Head of caudate nucleus (tissue), 42 donors: ENCODE measurements at regions of chr17 and their contacts with region 1.

Region 1: DNA sequence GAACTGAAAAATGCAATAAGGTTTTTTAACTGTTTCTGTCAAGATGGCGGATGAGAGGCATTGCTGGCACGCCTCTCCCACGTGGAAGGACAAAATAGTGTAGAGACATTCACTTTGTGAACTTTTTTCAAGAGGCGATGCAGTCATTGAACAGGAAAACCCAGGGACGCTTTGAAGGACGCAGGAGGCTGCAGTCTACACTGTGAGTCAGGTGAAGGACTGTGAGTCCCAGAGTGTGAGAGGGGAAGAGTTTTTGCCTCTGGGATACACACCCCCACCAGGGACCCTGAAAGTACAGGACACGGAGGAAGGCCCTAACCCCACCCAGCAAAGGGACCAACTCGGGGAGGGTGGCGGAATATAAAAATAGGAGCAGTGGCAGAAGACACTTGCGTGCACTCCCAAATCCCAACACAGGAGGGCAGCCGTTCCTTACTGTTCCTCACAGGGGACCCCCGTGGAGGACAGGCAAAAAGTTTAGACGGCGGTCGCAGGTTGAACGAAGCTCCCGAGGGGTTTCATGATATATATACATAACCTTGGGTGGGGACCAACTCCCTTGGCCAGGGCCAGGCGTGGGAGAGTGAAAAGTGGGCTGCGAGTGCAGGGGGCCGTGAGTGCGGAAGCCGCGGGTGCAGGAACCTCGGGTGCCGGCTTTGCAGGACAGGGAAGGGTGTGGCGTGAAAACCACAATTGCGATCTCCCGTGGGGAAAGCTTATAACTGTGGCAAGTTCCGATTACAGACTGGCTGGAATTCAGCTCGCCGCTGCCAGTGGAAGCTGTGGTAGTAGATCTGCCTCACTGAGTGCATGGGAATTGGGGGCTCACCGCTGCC is 82.0 kb upstream of the ALOX12 start:
- DNase-seq: peak; percentile 47 to 91 (median 78)

Region 2: DNA sequence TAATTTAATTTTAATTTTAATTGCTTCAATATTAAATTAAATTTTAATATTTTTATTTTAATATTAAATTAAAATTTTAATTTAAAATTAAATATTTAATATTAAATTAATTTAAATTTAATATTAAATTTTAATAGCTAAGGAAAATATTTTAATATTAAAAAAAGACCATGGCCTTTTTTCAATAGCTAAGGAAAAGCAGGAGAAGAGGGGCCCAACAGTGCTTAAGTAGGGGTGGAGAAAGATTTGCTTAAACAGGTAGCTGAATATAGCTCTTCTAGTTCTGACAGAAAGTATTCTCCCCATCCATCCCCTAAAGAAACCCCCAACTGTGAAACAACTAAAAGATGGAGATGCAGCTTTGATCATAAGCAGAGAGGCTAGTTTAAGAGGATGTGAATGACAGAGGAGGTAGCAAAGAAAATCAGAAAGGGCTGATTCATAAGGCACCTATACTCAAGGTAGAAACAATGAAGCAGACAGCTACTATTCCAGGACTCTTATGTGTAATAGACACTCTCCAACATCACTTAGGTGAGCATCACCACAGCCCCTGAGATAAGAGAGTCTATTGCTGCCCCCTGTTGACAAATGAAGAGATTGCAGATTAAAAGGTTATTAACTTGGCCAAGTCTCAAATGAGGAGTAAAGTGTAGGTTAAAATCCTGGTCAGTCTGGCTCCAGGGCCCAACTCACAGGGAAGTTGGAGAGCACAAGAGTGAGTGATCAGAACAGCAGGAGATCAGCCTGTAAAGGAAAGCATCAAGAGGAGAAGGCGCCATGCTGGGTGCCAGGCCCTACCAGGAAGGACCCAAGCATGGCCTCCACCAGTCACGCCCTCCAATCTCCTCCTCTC is 90.8 kb after region 1 on chr17:
- intact Hi-C with region 1: loop called (anchors 5 kb)
- DNase-seq: peak in 7 of 42 donors; percentile 36 to 74 (median 53)

Region 3: DNA sequence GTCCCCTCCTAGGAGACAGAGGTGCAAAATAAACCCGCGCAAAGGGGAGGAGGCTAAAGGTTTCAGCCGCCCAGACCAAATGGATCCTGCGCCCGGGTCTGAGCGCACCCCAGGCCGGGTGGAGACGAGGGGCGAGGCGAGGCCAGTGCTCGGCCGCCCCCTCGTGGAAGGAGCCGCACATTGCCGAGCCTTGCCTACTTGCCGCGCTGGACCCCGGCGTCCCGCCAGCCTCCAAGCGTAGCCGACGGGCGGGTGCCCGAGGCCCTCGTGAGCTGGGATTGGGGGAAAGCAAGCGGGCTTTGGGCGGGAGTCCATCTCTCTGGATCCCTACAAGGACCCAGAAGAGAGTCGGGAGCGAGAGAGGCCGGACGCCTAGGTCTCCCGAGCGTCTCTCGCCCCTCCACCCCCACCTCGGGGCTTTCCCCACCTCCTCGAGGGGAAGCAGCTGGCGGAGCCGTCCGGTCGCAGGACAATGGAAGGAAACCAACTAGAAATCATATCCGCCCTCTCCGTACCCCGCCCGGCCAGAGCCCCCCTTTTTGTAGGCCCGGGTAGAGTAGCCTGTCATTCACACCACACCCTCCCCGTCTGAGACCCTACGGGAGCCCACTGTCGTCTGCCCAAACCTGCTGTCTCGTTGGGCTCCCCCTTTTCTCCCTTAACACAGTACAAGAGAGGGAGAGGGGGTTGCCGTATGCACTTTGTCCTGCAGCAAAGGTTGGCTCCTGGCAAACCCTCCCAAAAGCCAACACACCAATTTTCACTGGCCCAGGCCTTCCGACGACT is 108.4 kb after region 1 on chr17:
- intact Hi-C with region 1: loop called (anchors 5 kb)
- DNase-seq: peak in 40 of 42 donors; percentile 49 to 89 (median 74)